A549 (cell line): ENCODE measurements at regions of chr17 and their contacts with region 1.

Region 1: DNA sequence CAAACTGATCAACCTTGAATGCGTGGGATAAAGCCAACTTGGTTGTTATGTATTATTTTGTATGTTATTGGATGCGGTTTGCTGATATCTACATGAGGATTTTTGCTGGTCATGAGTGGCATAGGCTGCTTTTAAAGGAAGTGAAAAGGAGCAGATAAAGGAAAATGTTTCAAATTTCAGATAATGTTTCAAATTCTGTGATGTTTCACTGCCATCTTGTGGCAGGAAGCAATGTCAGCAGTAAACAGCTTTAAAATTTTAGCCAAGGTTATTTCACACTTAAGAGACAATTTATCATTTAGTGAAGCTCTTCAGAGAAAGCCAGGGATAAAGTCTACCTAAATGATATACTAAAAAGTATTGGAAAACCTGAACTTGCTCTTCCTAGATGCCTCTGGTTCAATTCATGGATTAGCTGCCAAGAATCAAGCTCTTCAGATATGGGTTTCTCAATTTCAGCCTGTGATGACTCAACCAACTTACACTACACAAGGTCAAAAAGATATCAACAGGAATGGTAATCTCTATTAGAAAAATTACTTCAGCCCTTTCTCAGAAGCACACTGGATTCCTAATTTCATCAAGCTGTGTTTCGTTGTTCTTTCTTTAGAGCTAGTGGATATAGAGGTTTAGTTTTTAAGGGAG is 136.0 kb upstream of the C17orf78 start:
- DNase-seq: peak; percentile 21 to 38
- ATAC-seq: peak; percentile 57 to 64; a peak in 4 of 6 replicates
- H3K4me3 ChIP-seq: no peak overlapping the region
- H3K27ac ChIP-seq: no peak overlapping the region
- H3K4me1 ChIP-seq: 0 out of 3 replicates have a peak, but pooled peaks cover 6% of the 10 kb centered on the region
- CTCF ChIP-seq: peak; percentile 86
- EP300 ChIP-seq: no peak
- POLR2A ChIP-seq: no peak
- RAD21 ChIP-seq: peak; percentile 44 to 60

Region 2: DNA sequence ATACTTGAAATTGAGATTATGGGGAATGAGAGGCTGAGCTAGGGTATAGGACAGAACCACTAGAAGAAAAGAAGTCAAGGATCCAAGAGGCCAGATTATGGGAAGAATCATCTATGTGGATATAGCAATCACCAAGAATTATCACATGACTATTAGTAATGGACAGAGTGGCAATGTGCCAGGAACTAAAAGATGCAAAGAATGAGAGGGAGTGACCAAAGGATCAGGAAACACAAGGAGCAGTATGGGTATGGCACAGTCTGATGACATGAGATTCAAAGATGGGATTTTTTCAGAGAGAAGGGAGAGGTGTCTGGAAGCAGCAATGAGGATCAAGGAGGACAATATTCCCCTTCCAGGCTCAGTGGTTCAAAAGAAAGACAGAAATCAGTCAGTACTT is 78.9 kb before region 1 on chr17:
- CTCF ChIA-PET with region 1: no interaction called
- POLR2A ChIA-PET with region 1: no interaction called
- DNase-seq: peak; percentile 20 to 37
- ATAC-seq: peak; percentile 6 to 42; a peak in 3 of 6 replicates
- H3K4me3 ChIP-seq: no peak overlapping the region
- H3K27ac ChIP-seq: no peak overlapping the region
- H3K4me1 ChIP-seq: peaks cover 5% of the 10 kb centered on the region; the same call in 1 of the 3 replicates
- CTCF ChIP-seq: no peak
- EP300 ChIP-seq: no peak
- POLR2A ChIP-seq: no peak
- RAD21 ChIP-seq: no peak

Region 3: DNA sequence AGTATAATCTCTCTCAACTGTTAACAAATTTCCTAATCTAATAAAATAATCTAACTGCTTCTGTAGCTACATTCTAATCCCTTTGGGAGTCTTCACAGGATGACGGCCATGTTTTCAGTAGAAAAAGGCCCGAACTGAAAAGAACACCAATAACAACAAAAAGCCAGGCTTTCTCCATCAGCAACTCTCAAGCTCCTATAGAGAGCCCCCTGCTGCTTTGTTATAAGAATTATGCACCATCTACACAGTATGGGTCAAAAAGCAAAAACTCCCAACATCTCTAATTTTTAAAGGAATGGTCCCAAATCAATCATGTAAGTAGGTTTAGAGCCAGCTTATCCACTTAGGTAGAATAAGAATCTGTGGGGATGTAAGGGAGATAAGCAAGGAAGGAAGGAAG is 27.6 kb before region 1 on chr17:
- CTCF ChIA-PET with region 1: interaction called, 14 read pairs
- POLR2A ChIA-PET with region 1: no interaction called
- DNase-seq: no peak
- ATAC-seq: peak in 1 of 2 experiments; percentile 53; a peak in 2 of 6 replicates
- H3K4me3 ChIP-seq: no peak overlapping the region
- H3K27ac ChIP-seq: no peak overlapping the region
- H3K4me1 ChIP-seq: no peaks in the 10 kb centered on the region
- CTCF ChIP-seq: no peak
- EP300 ChIP-seq: no peak
- POLR2A ChIP-seq: no peak
- RAD21 ChIP-seq: 0 out of 5 replicates have a peak, but pooled peaks of 1 of the 2 experiments have one; percentile 5

Region 4: DNA sequence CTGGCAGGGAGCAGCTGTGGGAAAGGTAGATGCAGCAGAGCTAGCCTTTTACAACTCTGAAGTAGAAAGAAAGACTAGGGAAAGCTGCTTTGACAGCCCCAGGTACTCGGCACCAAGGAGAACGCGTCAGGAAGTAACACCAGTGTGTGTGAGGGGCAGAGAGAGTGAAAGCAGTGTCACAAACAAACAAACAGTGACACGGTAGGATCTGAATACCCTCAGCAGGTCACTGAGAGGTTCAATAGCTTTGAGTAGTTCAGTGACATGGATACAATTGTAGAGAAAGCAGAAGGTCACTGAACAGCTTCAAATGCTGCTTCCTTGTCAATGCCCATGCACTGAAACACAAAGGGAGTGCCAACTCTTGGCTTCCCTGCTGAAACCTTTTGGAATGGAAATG is 14.4 kb before region 1 on chr17:
- CTCF ChIA-PET with region 1: interaction called, 12 read pairs
- POLR2A ChIA-PET with region 1: no interaction called
- DNase-seq: no peak
- ATAC-seq: no peak
- H3K4me3 ChIP-seq: no peak overlapping the region
- H3K27ac ChIP-seq: no peak overlapping the region
- H3K4me1 ChIP-seq: no peaks in the 10 kb centered on the region
- CTCF ChIP-seq: no peak
- EP300 ChIP-seq: no peak
- POLR2A ChIP-seq: no peak
- RAD21 ChIP-seq: no peak

Region 5: DNA sequence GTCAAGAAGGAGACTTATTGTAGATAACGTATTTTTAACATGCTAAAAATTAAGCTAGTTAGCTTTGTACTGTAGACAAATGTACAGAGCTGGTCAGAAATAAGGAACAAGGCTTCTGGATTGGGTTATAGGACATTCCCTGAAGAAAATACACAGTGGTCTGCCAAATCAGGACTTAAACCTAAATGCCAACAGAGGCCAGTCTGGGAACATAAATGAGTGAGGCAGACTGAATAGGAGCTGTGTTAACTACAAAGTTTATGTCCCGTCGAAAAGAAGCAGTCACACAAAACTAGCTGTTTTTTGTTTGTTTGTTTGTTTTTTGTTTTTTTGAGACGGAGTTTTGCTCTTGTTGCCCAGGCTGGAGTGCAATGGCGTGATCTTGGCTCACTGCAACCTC is 15.6 kb after region 1 on chr17:
- CTCF ChIA-PET with region 1: interaction called, 47 read pairs
- POLR2A ChIA-PET with region 1: no interaction called
- DNase-seq: no peak
- ATAC-seq: no peak
- H3K4me3 ChIP-seq: no peak overlapping the region
- H3K27ac ChIP-seq: no peak overlapping the region
- H3K4me1 ChIP-seq: no peaks in the 10 kb centered on the region
- CTCF ChIP-seq: no peak
- EP300 ChIP-seq: no peak
- POLR2A ChIP-seq: no peak
- RAD21 ChIP-seq: no peak